ENCODE measurements at regions of chr1 and their contacts with region 1.

Region 1: DNA sequence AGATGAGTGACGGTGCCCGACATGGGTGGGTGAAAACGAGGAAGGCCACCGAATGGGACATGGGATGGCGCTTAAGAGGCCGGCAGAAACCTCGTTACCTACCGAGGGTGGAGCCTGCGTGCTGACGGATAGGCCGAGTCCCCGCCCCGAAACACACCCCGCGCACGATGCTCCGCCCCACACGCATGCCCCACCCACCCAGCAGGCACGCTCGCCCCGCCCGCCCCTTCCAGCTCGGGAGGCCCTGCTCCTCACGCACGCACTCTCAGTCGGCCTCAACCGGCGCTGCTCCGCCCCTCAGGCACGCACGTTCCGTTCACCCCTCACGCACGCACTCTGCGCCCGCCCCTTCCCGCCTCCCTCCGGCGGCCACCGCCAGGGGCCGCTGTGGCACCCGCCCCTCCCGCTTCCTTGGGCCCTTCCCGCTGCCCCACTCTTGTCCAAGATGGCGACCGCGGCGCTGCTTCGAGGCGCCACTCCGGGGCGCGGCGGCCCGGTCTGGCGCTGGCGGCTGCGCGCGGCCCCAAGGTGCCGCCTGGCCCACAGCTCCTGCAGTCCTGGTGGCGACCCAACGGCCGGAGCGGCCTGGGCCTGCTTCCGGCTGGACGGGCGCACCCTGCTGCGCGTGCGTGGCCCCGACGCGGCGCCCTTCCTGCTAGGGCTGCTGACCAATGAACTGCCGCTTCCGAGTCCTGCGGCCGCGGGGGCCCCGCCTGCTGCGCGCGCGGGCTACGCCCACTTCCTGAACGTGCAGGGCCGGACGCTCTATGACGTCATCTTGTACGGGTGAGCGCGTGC is at the start of gene IBA57:
- DNase-seq: peak; percentile 99
- H3K4me3 Mint-ChIP-seq: peak within 1 kb of the TSS; percentile 86
- H3K27ac Mint-ChIP-seq: peak within 1 kb of the TSS; percentile 94
- H3K4me1 Mint-ChIP-seq: peaks cover 21% of the 10 kb centered on the region
- H3K27me3 Mint-ChIP-seq: no peaks in the 10 kb centered on the region
- total RNA-seq, gene IBA57: 7.5 and 8.1 TPM in 2 replicates

Region 2: GRCh38 chr1:227999056-227999930 is 166.3 kb before region 1 on chr1:
- intact Hi-C with region 1: loop called (anchors 1 kb)
- DNase-seq: peak; percentile 29
- H3K4me3 Mint-ChIP-seq: no peak overlapping the region
- H3K27ac Mint-ChIP-seq: no peak overlapping the region
- H3K4me1 Mint-ChIP-seq: no peaks in the 10 kb centered on the region
- H3K27me3 Mint-ChIP-seq: peaks cover 18% of the 10 kb centered on the region

Region 3: DNA sequence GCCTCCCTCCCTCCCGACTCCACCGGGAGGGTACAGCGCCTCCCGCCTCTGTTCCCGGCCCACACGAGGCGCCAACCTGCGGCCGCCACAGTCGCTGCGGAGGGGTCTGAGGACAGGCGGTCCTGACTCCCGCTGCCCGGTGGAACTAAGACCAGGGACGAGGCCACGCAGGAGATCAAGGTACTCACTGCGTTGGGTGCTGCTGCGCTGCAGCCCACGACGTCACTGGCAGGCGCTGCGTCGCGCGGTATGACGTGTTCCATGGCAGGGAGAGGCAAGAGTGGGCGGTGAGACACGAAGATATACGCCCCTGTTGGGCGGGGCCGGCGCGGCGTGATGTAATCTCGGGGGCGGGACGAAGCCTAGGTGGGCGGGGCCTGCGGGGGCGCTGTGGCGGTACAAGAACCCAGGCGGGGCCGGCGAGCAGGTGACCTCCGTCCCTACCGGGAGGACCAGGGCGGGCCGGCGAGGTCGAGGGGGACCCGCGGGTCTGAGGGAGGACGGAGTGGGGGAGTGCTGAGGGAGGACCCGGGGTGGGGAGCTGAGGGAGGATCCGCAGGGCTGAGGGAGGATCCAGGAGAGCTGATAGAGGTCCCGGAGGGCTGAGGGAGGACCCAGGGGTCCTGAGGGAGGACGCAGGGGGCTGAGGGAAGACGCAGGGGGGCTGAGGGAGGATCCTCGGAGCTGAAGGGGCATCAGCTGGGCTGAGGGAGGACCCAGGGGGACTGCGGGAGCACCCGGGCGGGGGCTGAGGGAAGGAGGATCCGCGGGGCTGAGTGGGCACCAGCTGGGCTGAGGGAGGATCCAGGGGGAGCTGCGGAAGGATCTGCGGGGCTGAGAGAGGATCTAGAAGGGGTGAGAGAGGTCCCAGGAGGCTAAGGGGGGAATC is 56.3 kb before region 1 on chr1 and contains the start of gene MRPL55:
- intact Hi-C with region 1: loop called (anchors 1 kb)
- DNase-seq: peak; percentile 99
- H3K4me3 Mint-ChIP-seq: peak within 1 kb of the TSS; percentile 87
- H3K27ac Mint-ChIP-seq: peak within 1 kb of the TSS; percentile 89
- H3K4me1 Mint-ChIP-seq: peaks cover 28% of the 10 kb centered on the region
- H3K27me3 Mint-ChIP-seq: peaks cover 3% of the 10 kb centered on the region
- total RNA-seq, gene MRPL55: 53.3 and 61.7 TPM in 2 replicates

Region 4: DNA sequence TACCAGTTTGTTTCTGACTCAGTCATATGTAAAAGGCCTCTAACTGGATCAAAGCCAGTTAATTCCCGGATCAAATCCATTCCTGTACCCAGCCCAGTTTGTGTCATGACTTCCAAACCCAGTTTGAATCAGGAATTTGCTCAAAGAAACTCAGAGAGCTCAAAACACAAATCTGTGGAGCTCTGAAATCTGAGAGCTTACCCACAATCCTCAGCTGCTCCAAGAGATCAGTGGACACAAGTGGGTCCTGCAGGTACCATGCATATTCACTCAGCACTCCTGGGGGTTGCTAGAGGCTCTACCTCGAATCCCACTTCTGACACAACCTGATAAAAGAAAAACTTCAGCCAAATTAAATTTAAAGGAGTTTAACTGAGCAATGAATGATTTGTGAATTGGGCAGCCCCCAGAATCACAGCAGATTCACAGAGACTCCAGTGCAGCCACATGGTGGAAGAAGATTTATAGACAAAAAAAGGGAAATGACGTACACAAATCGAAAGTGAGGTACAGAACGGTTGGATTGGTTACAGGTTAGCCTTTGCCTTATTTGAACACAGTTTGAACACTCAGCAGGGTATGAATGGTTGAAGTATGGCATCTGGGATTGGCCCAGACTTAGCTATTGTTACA is 44.6 kb before region 1 on chr1:
- intact Hi-C with region 1: no loop called
- DNase-seq: no peak
- H3K4me3 Mint-ChIP-seq: no peak overlapping the region
- H3K27ac Mint-ChIP-seq: no peak overlapping the region
- H3K4me1 Mint-ChIP-seq: peaks cover 7% of the 10 kb centered on the region
- H3K27me3 Mint-ChIP-seq: peaks cover 2% of the 10 kb centered on the region

Region 5: DNA sequence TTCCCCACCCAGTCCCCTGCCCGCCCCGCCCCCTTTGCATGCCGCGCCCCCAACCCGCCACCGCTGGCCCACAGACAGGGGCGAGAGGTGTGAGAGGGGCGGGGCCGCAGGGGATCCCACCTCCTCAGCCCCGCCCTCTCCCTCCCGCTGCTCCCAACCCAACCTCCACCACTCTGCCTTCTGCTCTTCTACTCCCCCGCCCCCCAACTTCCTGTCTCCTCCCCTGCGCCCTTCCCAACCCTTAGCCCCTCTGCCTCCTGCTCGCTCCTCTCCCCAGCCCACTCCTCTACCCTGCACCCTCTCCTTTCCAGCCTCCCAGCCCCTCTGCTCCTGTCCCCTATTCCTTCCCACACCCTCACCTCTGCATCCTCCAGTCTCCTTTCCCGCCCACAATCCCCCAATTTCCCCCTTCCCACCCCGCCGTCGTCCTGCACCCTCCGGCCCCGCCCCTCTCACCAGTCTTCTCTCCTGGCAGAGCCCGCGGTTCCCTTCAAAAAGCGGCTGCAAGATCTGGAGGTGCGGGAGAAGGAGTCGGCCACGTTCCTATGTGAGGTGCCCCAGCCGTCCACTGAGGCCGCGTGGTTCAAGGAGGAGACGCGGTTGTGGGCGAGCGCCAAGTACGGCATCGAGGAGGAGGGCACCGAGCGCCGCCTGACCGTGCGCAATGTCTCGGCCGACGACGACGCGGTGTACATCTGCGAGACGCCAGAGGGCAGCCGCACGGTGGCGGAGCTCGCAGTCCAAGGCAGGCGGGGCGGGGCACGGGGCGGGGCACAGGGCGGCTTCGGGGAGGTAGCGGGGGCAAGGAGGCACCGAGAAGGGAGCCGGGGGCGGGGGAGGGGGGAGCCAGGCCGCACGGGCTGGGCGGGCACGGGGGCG is 47.6 kb after region 1 on chr1:
- intact Hi-C with region 1: loop called (anchors 1 kb)
- DNase-seq: peak; percentile 80
- H3K4me3 Mint-ChIP-seq: peak overlapping the region; percentile 89
- H3K27ac Mint-ChIP-seq: peak overlapping the region; percentile 93
- H3K4me1 Mint-ChIP-seq: no peaks in the 10 kb centered on the region
- H3K27me3 Mint-ChIP-seq: peaks cover 4% of the 10 kb centered on the region

Region 6: GRCh38 chr1:228405987-228406265 is 240.4 kb after region 1 on chr1:
- intact Hi-C with region 1: loop called (anchors 1 kb)
- DNase-seq: no peak
- H3K4me3 Mint-ChIP-seq: peak overlapping the region; percentile 98
- H3K27ac Mint-ChIP-seq: peak overlapping the region; percentile 97
- H3K4me1 Mint-ChIP-seq: peaks cover 49% of the 10 kb centered on the region
- H3K27me3 Mint-ChIP-seq: no peaks in the 10 kb centered on the region

Region 7: GRCh38 chr1:229507951-229508822 is 1342.6 kb after region 1 on chr1 and contains the start of gene NUP133:
- intact Hi-C with region 1: loop called (anchors 10 kb)
- DNase-seq: peak; percentile 97
- H3K4me3 Mint-ChIP-seq: peak within 1 kb of the TSS; percentile 96
- H3K27ac Mint-ChIP-seq: peak within 1 kb of the TSS; percentile 97
- H3K4me1 Mint-ChIP-seq: peaks cover 25% of the 10 kb centered on the region
- H3K27me3 Mint-ChIP-seq: peaks cover 4% of the 10 kb centered on the region
- total RNA-seq, gene NUP133: 47.9 and 49.1 TPM in 2 replicates